ENCODE measurements at regions of chr7 and their contacts with region 1.

Region 1: GRCh38 chr7:101743241-101743994 is 74.0 kb upstream of the CUX1 start:
- DNase-seq: peak; percentile 84
- H3K4me3 Mint-ChIP-seq: peak overlapping the region; percentile 74
- H3K27ac Mint-ChIP-seq: peak overlapping the region; percentile 68
- H3K4me1 Mint-ChIP-seq: peaks cover 61% of the 10 kb centered on the region
- H3K27me3 Mint-ChIP-seq: peaks cover 12% of the 10 kb centered on the region

Region 2: GRCh38 chr7:101688183-101688831 is 55.1 kb before region 1 on chr7:
- CTCF ChIA-PET with region 1: interaction called, 14 read pairs
- DNase-seq: peak; percentile 83
- H3K4me3 Mint-ChIP-seq: no peak overlapping the region
- H3K27ac Mint-ChIP-seq: no peak overlapping the region
- H3K4me1 Mint-ChIP-seq: peaks cover 5% of the 10 kb centered on the region
- H3K27me3 Mint-ChIP-seq: peaks cover 10% of the 10 kb centered on the region

Region 3: DNA sequence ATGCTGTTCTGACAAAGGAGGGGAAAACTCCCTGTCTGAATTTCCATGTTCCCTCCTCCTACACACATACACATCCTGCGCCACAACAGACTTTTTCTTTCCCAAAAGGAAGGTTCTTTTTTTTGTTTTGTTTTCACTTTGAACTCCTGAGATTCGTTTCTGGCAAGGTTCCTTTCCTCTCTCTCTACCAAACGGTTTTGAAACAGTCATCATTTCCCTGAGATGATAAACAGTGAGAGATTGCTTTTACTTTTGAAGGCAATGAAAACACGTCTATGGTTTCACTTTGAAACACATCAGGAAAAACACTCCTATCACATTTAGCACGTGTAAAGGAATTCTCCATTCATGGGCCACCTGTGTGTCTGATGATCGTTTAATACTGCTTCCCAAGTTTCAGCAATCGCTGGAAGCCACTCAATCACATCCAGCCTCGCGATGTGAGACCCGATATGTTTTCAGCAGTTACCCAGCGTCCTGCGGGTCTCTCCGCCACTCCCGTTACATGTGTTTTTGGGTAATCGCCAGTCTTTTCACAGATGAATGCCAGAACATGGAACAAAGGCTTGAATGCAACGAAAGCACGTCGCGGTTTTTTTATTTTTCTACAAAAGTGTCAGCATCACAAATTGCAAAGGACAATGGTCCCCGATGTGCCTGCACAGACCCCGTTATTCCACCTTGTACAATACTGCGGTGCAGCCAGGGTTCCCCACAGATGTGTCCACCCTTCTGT is 11.2 kb after region 1 on chr7:
- CTCF ChIA-PET with region 1: interaction called, 26 read pairs
- DNase-seq: no peak
- H3K4me3 Mint-ChIP-seq: peak overlapping the region; percentile 73
- H3K27ac Mint-ChIP-seq: peak overlapping the region; percentile 82
- H3K4me1 Mint-ChIP-seq: peaks cover 24% of the 10 kb centered on the region
- H3K27me3 Mint-ChIP-seq: peaks cover 3% of the 10 kb centered on the region

Region 4: GRCh38 chr7:101814991-101815834 is 71.8 kb after region 1 on chr7:
- CTCF ChIA-PET with region 1: interaction called, 13 read pairs
- DNase-seq: peak; percentile 70
- H3K4me3 Mint-ChIP-seq: peak overlapping the region; percentile 74
- H3K27ac Mint-ChIP-seq: peak overlapping the region; percentile 2
- H3K4me1 Mint-ChIP-seq: peaks cover 19% of the 10 kb centered on the region
- H3K27me3 Mint-ChIP-seq: peaks cover 37% of the 10 kb centered on the region

Region 5: GRCh38 chr7:102859084-102859798 is 1115.8 kb after region 1 on chr7:
- CTCF ChIA-PET with region 1: no interaction called
- DNase-seq: no peak
- H3K4me3 Mint-ChIP-seq: no peak overlapping the region
- H3K27ac Mint-ChIP-seq: no peak overlapping the region
- H3K4me1 Mint-ChIP-seq: no peaks in the 10 kb centered on the region
- H3K27me3 Mint-ChIP-seq: peaks cover 3% of the 10 kb centered on the region